ENCODE measurements at regions of chr19 and their contacts with region 1.

Region 1: GRCh38 chr19:41837981-41838708 is 6.3 kb downstream of the LYPD4 start:
- DNase-seq: no peak
- ATAC-seq: no peak
- H3K4me3 ChIP-seq: no peak overlapping the region
- H3K27ac ChIP-seq: no peak overlapping the region
- H3K4me1 ChIP-seq: no peaks in the 10 kb centered on the region
- H3K27me3 ChIP-seq: peaks cover 13% of the 10 kb centered on the region
- CTCF ChIP-seq: no peak
- POLR2A ChIP-seq: no peak
- RAD21 ChIP-seq: no peak

Region 2: GRCh38 chr19:41821003-41821735 is 17.0 kb before region 1 on chr19:
- CTCF ChIA-PET with region 1: interaction called, 11 read pairs
- POLR2A ChIA-PET with region 1: no interaction called
- dilution Hi-C with region 1: no loop called
- in situ Hi-C with region 1: no loop called
- intact Hi-C with region 1: no loop called
- DNase-seq: peak; percentile 15
- ATAC-seq: peak; percentile 51; the same call in 1 of the 2 replicates
- H3K4me3 ChIP-seq: no peak overlapping the region
- H3K27ac ChIP-seq: no peak overlapping the region
- H3K4me1 ChIP-seq: no peaks in the 10 kb centered on the region
- H3K27me3 ChIP-seq: no peaks in the 10 kb centered on the region; the same call in 1 of the 2 replicates
- CTCF ChIP-seq: peak; percentile 48
- POLR2A ChIP-seq: no peak
- RAD21 ChIP-seq: peak; percentile 48

Measured in IMR-90 (cell line).